ENCODE measurements at regions of chr11 and their contacts with region 1.

Region 1: GRCh38 chr11:63227521-63228107 is 15.8 kb downstream of the SLC22A25 start:
- DNase-seq: no peak
- ATAC-seq: peak; percentile 20
- H3K4me3 ChIP-seq: no peak overlapping the region
- H3K27ac ChIP-seq: peak overlapping the region; percentile 4
- H3K4me1 ChIP-seq: peaks cover 56% of the 10 kb centered on the region
- H3K27me3 ChIP-seq: no peaks in the 10 kb centered on the region
- CTCF ChIP-seq: no peak
- EP300 ChIP-seq: no peak
- POLR2A ChIP-seq: no peak
- RAD21 ChIP-seq: no peak

Region 2: GRCh38 chr11:63240791-63241379 is 13.3 kb after region 1 on chr11:
- CTCF ChIA-PET with region 1: no interaction called
- POLR2A ChIA-PET with region 1: interaction called, 22 read pairs
- in situ Hi-C with region 1: no loop called
- intact Hi-C with region 1: no loop called
- DNase-seq: peak; percentile 78
- ATAC-seq: peak; percentile 79
- H3K4me3 ChIP-seq: peak overlapping the region in 1 of 3 experiments; percentile 11; a peak in 1 of 6 replicates
- H3K27ac ChIP-seq: peak overlapping the region; percentile 66
- H3K4me1 ChIP-seq: peaks cover 98% of the 10 kb centered on the region
- H3K27me3 ChIP-seq: no peaks in the 10 kb centered on the region
- CTCF ChIP-seq: no peak
- EP300 ChIP-seq: peak in 1 of 2 experiments; percentile 67; a peak in 2 of 4 replicates
- POLR2A ChIP-seq: no peak
- RAD21 ChIP-seq: no peak

Measured in HepG2 (cell line).